Caco-2 (cell line): ENCODE measurements at regions of chr1 and their contacts with region 1.

Region 1: GRCh38 chr1:63442141-63442475 is 74.7 kb downstream of the ALG6 start:
- DNase-seq: no peak
- H3K4me3 ChIP-seq: no peak overlapping the region
- H3K4me3 Mint-ChIP-seq: no peak overlapping the region
- H3K27ac Mint-ChIP-seq: no peak overlapping the region
- H3K4me1 ChIP-seq: no peaks in the 10 kb centered on the region
- H3K4me1 Mint-ChIP-seq: no peaks in the 10 kb centered on the region
- H3K27me3 ChIP-seq: no peaks in the 10 kb centered on the region
- H3K27me3 Mint-ChIP-seq: no peaks in the 10 kb centered on the region
- CTCF ChIP-seq: no peak

Region 2: DNA sequence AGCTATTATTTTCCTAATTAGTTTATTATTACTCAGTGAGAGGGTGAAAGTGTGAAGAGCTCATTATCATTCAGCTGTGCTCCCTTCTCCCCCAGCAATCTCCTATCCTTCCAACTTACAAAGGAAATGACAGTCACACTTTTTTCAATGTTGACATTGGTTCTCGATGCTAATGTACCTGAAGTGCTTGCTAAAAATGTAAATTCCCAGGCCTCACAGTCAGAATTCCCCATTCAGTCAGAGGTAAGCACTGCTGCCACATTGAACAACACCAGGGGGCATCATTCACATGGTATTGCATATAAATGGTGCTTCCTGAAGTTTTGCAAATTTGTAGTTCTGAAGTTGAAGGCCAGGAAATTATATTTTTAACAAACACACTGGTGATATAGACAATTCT is 252.4 kb before region 1 on chr1:
- CTCF ChIA-PET with region 1: no interaction called
- POLR2A ChIA-PET with region 1: no interaction called
- intact Hi-C with region 1: loop called (anchors 1 kb)
- DNase-seq: no peak
- H3K4me3 ChIP-seq: no peak overlapping the region
- H3K4me3 Mint-ChIP-seq: no peak overlapping the region
- H3K27ac Mint-ChIP-seq: no peak overlapping the region
- H3K4me1 ChIP-seq: no peaks in the 10 kb centered on the region
- H3K4me1 Mint-ChIP-seq: no peaks in the 10 kb centered on the region
- H3K27me3 ChIP-seq: no peaks in the 10 kb centered on the region
- H3K27me3 Mint-ChIP-seq: peaks cover 3% of the 10 kb centered on the region
- CTCF ChIP-seq: no peak

Region 3: GRCh38 chr1:63316984-63317816 is 124.9 kb before region 1 on chr1:
- CTCF ChIA-PET with region 1: no interaction called
- POLR2A ChIA-PET with region 1: no interaction called
- intact Hi-C with region 1: loop called (anchors 2 kb)
- DNase-seq: peak; percentile 81 to 83
- H3K4me3 ChIP-seq: peak overlapping the region; percentile 47
- H3K4me3 Mint-ChIP-seq: peak overlapping the region; percentile 62
- H3K27ac Mint-ChIP-seq: no peak overlapping the region
- H3K4me1 ChIP-seq: 0 out of 2 replicates have a peak, but pooled peaks cover 3% of the 10 kb centered on the region
- H3K4me1 Mint-ChIP-seq: no peaks in the 10 kb centered on the region
- H3K27me3 ChIP-seq: no peaks in the 10 kb centered on the region
- H3K27me3 Mint-ChIP-seq: peaks cover 26% of the 10 kb centered on the region
- CTCF ChIP-seq: peak; percentile 54 to 68

Region 4: GRCh38 chr1:63367215-63368103 is 74.6 kb before region 1 on chr1 and contains the start of gene ALG6:
- CTCF ChIA-PET with region 1: no interaction called
- POLR2A ChIA-PET with region 1: no interaction called
- intact Hi-C with region 1: loop called (anchors 5 kb)
- DNase-seq: peak; percentile 90 to 94
- H3K4me3 ChIP-seq: peak within 1 kb of the TSS; percentile 87
- H3K4me3 Mint-ChIP-seq: peak within 1 kb of the TSS; percentile 97
- H3K27ac Mint-ChIP-seq: peak within 1 kb of the TSS; percentile 82
- H3K4me1 ChIP-seq: no peaks in the 10 kb centered on the region
- H3K4me1 Mint-ChIP-seq: peaks cover 7% of the 10 kb centered on the region
- H3K27me3 ChIP-seq: no peaks in the 10 kb centered on the region
- H3K27me3 Mint-ChIP-seq: no peaks in the 10 kb centered on the region
- CTCF ChIP-seq: no peak
- total RNA-seq, gene ALG6: 9.2 and 9.4 TPM in 2 replicates